ENCODE measurements at regions of chr22 and their contacts with region 1.

Region 1: DNA sequence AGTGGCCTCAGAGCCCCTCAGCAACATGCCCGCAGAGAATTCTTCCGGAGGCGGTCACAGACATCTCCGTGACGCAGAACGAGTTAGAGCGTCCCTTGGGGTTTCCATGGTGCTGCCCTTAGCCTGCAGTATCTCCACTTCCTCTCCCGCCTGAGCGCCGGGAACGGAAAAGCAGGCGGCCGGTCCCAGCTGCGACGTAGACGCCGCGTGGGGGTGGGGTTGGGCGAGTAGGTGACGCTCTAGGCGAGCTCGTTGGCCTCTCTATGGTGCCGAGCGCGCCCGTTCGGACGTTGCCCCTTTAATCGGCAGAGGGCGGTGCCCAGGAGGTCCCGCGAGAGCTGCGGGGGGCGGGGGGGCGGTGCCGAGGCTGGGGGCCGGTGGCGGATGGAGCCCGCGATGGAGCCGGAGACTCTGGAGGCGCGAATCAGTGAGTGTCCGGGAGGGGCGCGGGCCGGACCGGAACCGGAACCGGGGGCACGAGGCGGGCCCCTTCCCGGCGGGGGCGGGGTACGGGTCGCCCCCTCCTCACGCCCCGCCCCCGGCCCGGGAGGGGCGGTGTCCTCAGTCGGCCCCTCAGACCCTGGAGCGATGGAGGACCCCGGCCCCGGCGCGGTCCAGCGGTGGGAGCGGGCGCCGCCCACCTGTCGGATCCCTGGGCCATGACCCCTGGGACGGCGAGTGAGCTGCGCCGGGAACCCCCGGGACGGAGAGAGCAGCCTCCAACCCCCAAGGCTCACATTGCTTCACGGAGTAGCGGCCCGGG is at the start of gene GGA1:
- DNase-seq: peak; percentile 99
- H3K4me3 ChIP-seq: peak within 1 kb of the TSS; percentile 46 to 83 (median 73)
- H3K27ac ChIP-seq: peak within 1 kb of the TSS; percentile 79
- H3K4me1 ChIP-seq: peaks cover 19% of the 10 kb centered on the region
- H3K27me3 ChIP-seq: peaks cover 0 to 7% of the 10 kb centered on the region in 2 experiments
- CTCF ChIP-seq: no peak
- POLR2A ChIP-seq: no peak
- total RNA-seq, gene GGA1: 55.9 and 67.5 TPM in 2 replicates

Region 2: DNA sequence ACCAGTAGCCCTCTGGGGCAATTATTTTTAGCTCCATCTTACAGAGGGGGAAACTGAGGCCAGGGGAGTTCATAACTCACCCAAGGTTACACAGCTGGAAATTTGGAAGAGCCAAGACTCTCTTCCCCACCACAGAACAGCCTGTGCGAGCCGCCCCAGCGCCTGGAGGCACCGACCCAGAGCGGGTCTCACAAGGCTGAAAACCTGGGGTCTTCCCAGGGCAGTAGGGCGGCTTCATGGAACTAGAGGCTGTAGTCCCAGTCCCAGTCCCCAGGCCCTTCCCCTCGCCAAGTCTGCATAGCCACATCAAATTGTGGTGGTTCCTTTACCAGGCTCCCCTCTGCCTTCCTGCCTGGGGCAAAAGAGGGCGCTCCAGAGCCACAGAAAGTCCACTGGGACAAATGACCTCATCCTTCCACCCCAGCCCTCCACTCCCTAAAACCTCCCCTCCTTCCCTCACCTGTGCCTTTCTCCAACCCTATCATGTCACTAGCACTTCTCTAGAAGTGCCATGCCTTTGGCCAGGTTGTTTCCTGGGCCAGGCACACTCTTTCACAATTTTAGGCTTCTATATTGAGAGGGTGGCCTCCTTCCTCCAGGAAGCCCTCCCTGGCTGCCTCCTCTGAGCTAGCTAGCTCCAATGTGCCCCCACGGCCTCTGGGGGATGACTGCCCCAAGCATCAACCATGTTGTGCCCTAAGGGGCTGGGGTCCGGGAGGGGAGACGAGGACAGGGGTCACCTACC is 63.5 kb before region 1 on chr22:
- CTCF ChIA-PET with region 1: interaction called, 32 read pairs
- POLR2A ChIA-PET with region 1: interaction called, 3 read pairs
- dilution Hi-C with region 1: no loop called
- intact Hi-C with region 1: loop called (anchors 2 kb)
- DNase-seq: peak; percentile 80
- H3K4me3 ChIP-seq: no peak overlapping the region
- H3K27ac ChIP-seq: peak overlapping the region; percentile 91
- H3K4me1 ChIP-seq: peaks cover 22% of the 10 kb centered on the region
- H3K27me3 ChIP-seq: no peaks in the 10 kb centered on the region
- CTCF ChIP-seq: peak; percentile 88 to 91
- POLR2A ChIP-seq: no peak

Region 3: GRCh38 chr22:37566903-37567820 is 41.5 kb before region 1 on chr22:
- CTCF ChIA-PET with region 1: interaction called, 24 read pairs
- POLR2A ChIA-PET with region 1: no interaction called
- dilution Hi-C with region 1: no loop called
- intact Hi-C with region 1: no loop called
- DNase-seq: peak; percentile 58
- H3K4me3 ChIP-seq: no peak overlapping the region
- H3K27ac ChIP-seq: peak overlapping the region; percentile 0
- H3K4me1 ChIP-seq: peaks cover 43% of the 10 kb centered on the region
- H3K27me3 ChIP-seq: no peaks in the 10 kb centered on the region
- CTCF ChIP-seq: peak; percentile 83 to 93
- POLR2A ChIP-seq: peak; percentile 2

Region 4: DNA sequence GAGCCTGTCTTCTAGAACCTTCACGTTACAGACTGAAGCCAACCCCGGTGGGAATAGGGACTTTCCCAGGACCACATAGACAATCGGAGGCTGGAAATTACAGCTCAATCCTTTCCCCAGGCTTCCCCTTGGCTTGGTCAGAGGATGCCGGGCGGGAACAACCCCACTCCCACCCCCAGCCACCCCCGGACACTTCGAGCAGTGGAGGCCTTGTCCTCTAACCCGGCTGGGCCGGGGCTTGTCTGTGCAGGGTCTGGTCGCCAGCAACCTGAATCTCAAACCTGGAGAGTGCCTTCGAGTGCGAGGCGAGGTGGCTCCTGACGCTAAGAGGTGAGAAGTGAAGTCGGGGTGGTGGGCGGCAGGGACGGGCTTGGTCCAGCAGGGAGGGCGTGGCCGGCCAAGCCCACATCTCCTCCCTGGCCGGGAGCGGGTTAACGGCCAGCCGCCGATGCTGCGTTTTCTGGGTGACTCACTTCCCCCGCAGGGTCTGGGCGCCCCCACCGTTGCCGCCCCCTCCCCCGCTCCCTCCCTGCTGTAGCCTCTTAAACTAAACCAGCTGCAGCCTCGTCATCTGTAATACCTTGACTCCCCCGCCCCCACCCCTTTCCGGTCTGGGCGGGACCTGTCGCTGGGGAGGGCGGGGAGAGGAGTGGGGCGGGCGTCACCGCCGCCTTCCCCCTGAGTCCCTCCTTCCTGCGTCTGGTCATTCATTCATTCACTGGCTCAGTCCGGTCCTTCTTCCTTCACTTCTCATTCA is 68.3 kb after region 1 on chr22:
- CTCF ChIA-PET with region 1: interaction called, 13 read pairs
- POLR2A ChIA-PET with region 1: no interaction called
- dilution Hi-C with region 1: no loop called
- intact Hi-C with region 1: loop called (anchors 1 kb)
- DNase-seq: peak; percentile 95
- H3K4me3 ChIP-seq: peak overlapping the region; percentile 63 to 80 (median 66)
- H3K27ac ChIP-seq: peak overlapping the region; percentile 81
- H3K4me1 ChIP-seq: peaks cover 9% of the 10 kb centered on the region
- H3K27me3 ChIP-seq: no peaks in the 10 kb centered on the region
- CTCF ChIP-seq: no peak
- POLR2A ChIP-seq: peak; percentile 81

Region 5: DNA sequence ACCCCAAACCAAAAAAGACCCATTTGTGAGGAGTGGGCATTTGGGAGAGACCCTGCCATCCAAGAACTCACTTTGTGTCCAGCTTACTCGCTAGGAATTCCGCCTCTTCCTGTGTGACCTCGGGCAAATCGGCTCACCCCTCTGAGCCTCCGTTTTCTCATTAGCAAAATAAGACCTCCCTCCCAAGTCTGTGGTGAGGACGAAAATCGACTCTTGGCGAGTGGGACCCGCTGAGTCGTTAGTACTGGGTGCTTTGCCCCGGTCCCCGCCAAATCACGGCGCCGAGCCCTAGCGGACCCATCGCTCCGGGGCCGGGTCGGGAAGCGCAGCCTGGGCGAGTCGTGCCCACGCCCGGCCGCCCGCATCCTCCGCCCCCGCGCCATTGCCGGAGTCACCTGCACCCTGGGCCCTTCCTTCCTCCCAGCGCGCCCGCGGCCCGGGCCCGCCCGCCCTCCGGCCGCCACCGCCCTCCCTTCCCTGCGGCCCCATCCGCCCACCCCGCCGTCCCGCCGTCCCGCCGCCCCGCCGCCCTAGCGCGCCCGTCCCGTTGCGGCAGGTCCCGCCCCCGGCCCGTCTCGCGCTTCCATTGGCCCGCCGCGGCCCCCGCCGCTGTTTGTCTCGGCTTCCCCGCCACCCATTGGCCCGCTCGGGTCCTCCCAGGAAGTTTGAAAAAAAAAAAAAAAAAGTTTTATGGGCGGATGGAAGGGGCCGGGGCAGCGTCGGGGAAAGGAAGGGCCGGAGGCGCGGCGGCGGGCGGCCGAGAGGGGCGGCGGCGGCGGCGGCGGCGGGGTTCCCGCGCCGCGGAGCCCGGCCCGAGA is 137.1 kb after region 1 on chr22:
- CTCF ChIA-PET with region 1: interaction called, 5 read pairs
- POLR2A ChIA-PET with region 1: no interaction called
- dilution Hi-C with region 1: no loop called
- intact Hi-C with region 1: loop called (anchors 5 kb)
- DNase-seq: peak; percentile 88
- H3K4me3 ChIP-seq: peak overlapping the region; percentile 63 to 82 (median 75)
- H3K27ac ChIP-seq: peak overlapping the region; percentile 89
- H3K4me1 ChIP-seq: peaks cover 47% of the 10 kb centered on the region
- H3K27me3 ChIP-seq: no peaks in the 10 kb centered on the region
- CTCF ChIP-seq: no peak
- POLR2A ChIP-seq: peak; percentile 39

Region 6: GRCh38 chr22:38030311-38031133 is 421.9 kb after region 1 on chr22:
- CTCF ChIA-PET with region 1: no interaction called
- POLR2A ChIA-PET with region 1: no interaction called
- dilution Hi-C with region 1: no loop called
- intact Hi-C with region 1: no loop called
- DNase-seq: no peak
- H3K4me3 ChIP-seq: no peak overlapping the region
- H3K27ac ChIP-seq: no peak overlapping the region
- H3K4me1 ChIP-seq: peaks cover 12% of the 10 kb centered on the region
- H3K27me3 ChIP-seq: peaks cover 0 to 1% of the 10 kb centered on the region in 2 experiments
- CTCF ChIP-seq: no peak
- POLR2A ChIP-seq: no peak